ENCODE measurements at regions of chr10 and their contacts with region 1.

Region 1: DNA sequence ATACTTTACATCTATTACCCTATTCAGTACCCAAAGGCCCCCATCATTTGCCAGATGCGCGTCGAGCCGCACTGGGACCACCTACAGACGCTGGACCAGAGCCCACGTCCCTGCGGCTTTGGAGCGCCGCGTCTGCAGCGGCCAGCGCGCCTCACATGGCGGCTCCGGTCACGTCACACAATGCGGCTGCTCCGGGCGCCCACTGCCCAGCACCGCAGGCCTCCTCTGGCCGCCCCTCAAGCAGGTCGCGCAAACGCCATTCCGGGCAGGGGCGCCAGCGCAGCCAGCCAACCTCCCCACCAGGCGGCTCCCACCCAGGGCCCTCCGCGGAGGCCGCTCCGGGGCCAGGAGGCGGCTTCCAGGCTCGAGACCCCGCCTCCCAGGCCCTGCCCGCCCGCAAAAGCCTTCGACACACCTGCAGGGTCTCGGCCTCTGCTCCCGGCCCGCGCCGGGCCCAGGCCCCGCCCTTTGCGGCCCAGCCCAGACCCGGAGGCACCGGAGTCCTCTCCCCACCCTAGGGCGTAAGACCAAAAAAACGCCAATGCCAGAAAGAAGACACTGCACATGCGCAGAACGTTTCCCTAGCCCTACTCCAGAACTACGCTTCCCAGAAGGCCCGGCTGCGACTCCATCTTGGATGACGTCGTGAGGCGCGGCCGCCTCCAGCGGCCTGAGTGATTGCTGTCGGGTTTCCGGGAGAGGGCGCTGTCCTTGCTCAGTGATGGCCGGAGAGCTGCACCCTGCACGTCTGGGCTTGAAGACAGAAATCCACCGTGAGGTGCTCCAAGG is at the start of gene ZNF25:
- DNase-seq: peak; percentile 100
- ATAC-seq: peak; percentile 89
- H3K4me3 ChIP-seq: peak within 1 kb of the TSS; percentile 62 to 84 (median 78)
- H3K4me3 Mint-ChIP-seq: peak within 1 kb of the TSS; percentile 95
- H3K27ac ChIP-seq: peak within 1 kb of the TSS; percentile 88 to 94
- H3K27ac Mint-ChIP-seq: peak within 1 kb of the TSS; percentile 99
- H3K4me1 ChIP-seq: peaks cover 9 to 13% of the 10 kb centered on the region in 2 donors
- H3K4me1 Mint-ChIP-seq: peaks cover 17% of the 10 kb centered on the region
- H3K27me3 ChIP-seq: no peaks in the 10 kb centered on the region
- H3K27me3 Mint-ChIP-seq: no peaks in the 10 kb centered on the region
- CTCF ChIP-seq: peak; percentile 84
- total RNA-seq, gene ZNF25: 6.4 and 6.5 TPM in 2 replicates

Region 2: GRCh38 chr10:37857287-37858211 is 118.7 kb before region 1 on chr10 and contains the start of gene ZNF248:
- CTCF ChIA-PET with region 1: interaction called, 4 read pairs
- POLR2A ChIA-PET with region 1: interaction called, 3 read pairs
- intact Hi-C with region 1: loop called (anchors 1 kb)
- DNase-seq: peak; percentile 96
- ATAC-seq: peak; percentile 96
- H3K4me3 ChIP-seq: peak within 1 kb of the TSS; percentile 70 to 97 (median 88)
- H3K4me3 Mint-ChIP-seq: peak within 1 kb of the TSS; percentile 99
- H3K27ac ChIP-seq: peak within 1 kb of the TSS; percentile 85 to 95
- H3K27ac Mint-ChIP-seq: peak within 1 kb of the TSS; percentile 99
- H3K4me1 ChIP-seq: peaks cover 13 to 14% of the 10 kb centered on the region in 2 donors
- H3K4me1 Mint-ChIP-seq: peaks cover 35% of the 10 kb centered on the region
- H3K27me3 ChIP-seq: no peaks in the 10 kb centered on the region
- H3K27me3 Mint-ChIP-seq: no peaks in the 10 kb centered on the region
- CTCF ChIP-seq: no peak
- total RNA-seq, gene ZNF248: 18.2 and 19.5 TPM in 2 replicates

Region 3: GRCh38 chr10:37865957-37866671 is 110.2 kb before region 1 on chr10:
- CTCF ChIA-PET with region 1: interaction called, 4 read pairs
- POLR2A ChIA-PET with region 1: no interaction called
- intact Hi-C with region 1: loop called (anchors 2 kb)
- DNase-seq: peak; percentile 76
- ATAC-seq: peak; percentile 45
- H3K4me3 ChIP-seq: no peak overlapping the region
- H3K4me3 Mint-ChIP-seq: peak overlapping the region; percentile 45
- H3K27ac ChIP-seq: peak overlapping the region; percentile 64 to 87
- H3K27ac Mint-ChIP-seq: peak overlapping the region; percentile 96
- H3K4me1 ChIP-seq: peaks cover 11 to 13% of the 10 kb centered on the region in 2 donors
- H3K4me1 Mint-ChIP-seq: peaks cover 16% of the 10 kb centered on the region
- H3K27me3 ChIP-seq: no peaks in the 10 kb centered on the region
- H3K27me3 Mint-ChIP-seq: no peaks in the 10 kb centered on the region
- CTCF ChIP-seq: no peak

Region 4: GRCh38 chr10:37992083-37992482 is 15.8 kb after region 1 on chr10:
- CTCF ChIA-PET with region 1: interaction called, 12 read pairs
- POLR2A ChIA-PET with region 1: no interaction called
- intact Hi-C with region 1: no loop called
- DNase-seq: no peak
- ATAC-seq: no peak
- H3K4me3 ChIP-seq: no peak overlapping the region
- H3K4me3 Mint-ChIP-seq: no peak overlapping the region
- H3K27ac ChIP-seq: no peak overlapping the region
- H3K27ac Mint-ChIP-seq: no peak overlapping the region
- H3K4me1 ChIP-seq: no peaks in the 10 kb centered on the region
- H3K4me1 Mint-ChIP-seq: no peaks in the 10 kb centered on the region
- H3K27me3 ChIP-seq: no peaks in the 10 kb centered on the region
- H3K27me3 Mint-ChIP-seq: peaks cover 4% of the 10 kb centered on the region
- CTCF ChIP-seq: no peak

Region 5: DNA sequence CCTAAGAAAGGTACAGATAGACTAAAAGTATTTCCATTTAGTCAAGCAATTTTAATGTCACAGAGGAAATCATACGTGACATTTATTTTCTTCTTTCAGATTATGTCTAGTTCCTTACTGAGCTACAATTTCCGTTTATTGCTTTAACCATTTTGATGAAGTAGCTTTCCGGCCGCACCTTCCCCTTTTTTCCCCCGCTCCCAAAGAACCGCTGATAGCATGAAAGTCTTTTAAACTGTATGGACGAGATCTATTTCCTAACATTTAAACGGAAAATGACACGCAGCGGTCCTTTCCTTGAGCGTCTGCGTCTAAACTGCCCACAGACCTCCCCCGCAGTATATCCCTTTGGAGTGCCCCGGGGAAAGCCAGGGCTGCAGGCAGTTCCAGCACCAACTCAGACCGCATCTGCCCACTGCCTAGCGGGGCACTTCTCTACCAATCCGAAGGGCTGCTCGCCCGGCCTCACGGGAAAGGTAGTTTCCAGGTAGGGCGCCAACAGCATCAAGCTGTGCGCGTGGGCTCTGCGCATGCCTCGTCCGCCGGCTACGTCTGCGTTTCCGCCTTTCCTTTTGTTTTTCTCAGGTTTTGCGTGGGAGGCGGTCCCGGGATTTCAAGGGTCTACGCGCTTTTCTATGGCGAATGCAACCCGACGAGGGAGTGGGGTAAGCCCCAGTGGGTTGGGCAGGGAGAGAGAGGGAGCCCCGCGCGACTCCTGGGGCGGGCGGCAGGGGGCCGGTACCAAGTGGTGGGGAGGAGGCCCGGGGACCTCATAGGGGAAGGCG is 34.0 kb after region 1 on chr10 and contains the start of gene ZNF33A:
- CTCF ChIA-PET with region 1: interaction called, 31 read pairs
- POLR2A ChIA-PET with region 1: interaction called, 23 read pairs
- intact Hi-C with region 1: loop called (anchors 1 kb)
- DNase-seq: peak; percentile 97
- ATAC-seq: peak; percentile 84
- H3K4me3 ChIP-seq: peak within 1 kb of the TSS; percentile 72 to 78 (median 73)
- H3K4me3 Mint-ChIP-seq: peak within 1 kb of the TSS; percentile 80
- H3K27ac ChIP-seq: peak within 1 kb of the TSS; percentile 99
- H3K27ac Mint-ChIP-seq: peak within 1 kb of the TSS; percentile 99
- H3K4me1 ChIP-seq: peaks cover 16 to 17% of the 10 kb centered on the region in 2 donors
- H3K4me1 Mint-ChIP-seq: peaks cover 31% of the 10 kb centered on the region
- H3K27me3 ChIP-seq: no peaks in the 10 kb centered on the region
- H3K27me3 Mint-ChIP-seq: no peaks in the 10 kb centered on the region
- CTCF ChIP-seq: no peak
- total RNA-seq, gene ZNF33A: 86.6 and 96.1 TPM in 2 replicates

Region 6: GRCh38 chr10:38038107-38038931 is 62.0 kb after region 1 on chr10:
- CTCF ChIA-PET with region 1: interaction called, 4 read pairs
- POLR2A ChIA-PET with region 1: no interaction called
- intact Hi-C with region 1: loop called (anchors 1 kb)
- DNase-seq: peak; percentile 64
- ATAC-seq: peak; percentile 90
- H3K4me3 ChIP-seq: peak overlapping the region in 4 of 5 experiments; percentile 22 to 48 (median 35)
- H3K4me3 Mint-ChIP-seq: peak overlapping the region; percentile 76
- H3K27ac ChIP-seq: peak overlapping the region; percentile 76 to 81
- H3K27ac Mint-ChIP-seq: peak overlapping the region; percentile 89
- H3K4me1 ChIP-seq: peaks cover 9 to 14% of the 10 kb centered on the region in 2 donors
- H3K4me1 Mint-ChIP-seq: peaks cover 32% of the 10 kb centered on the region
- H3K27me3 ChIP-seq: no peaks in the 10 kb centered on the region
- H3K27me3 Mint-ChIP-seq: no peaks in the 10 kb centered on the region
- CTCF ChIP-seq: no peak

Region 7: GRCh38 chr10:38094158-38094920 is 118.1 kb after region 1 on chr10 and contains the start of gene ZNF37A:
- CTCF ChIA-PET with region 1: interaction called, 7 read pairs
- POLR2A ChIA-PET with region 1: interaction called, 3 read pairs
- intact Hi-C with region 1: loop called (anchors 1 kb)
- DNase-seq: peak; percentile 93
- ATAC-seq: peak; percentile 98
- H3K4me3 ChIP-seq: peak within 1 kb of the TSS; percentile 81 to 91 (median 89)
- H3K4me3 Mint-ChIP-seq: peak within 1 kb of the TSS; percentile 92
- H3K27ac ChIP-seq: peak within 1 kb of the TSS; percentile 84 to 88
- H3K27ac Mint-ChIP-seq: peak within 1 kb of the TSS; percentile 90
- H3K4me1 ChIP-seq: peaks cover 13 to 17% of the 10 kb centered on the region in 2 donors
- H3K4me1 Mint-ChIP-seq: peaks cover 22% of the 10 kb centered on the region
- H3K27me3 ChIP-seq: no peaks in the 10 kb centered on the region
- H3K27me3 Mint-ChIP-seq: no peaks in the 10 kb centered on the region
- CTCF ChIP-seq: no peak
- total RNA-seq, gene ZNF37A: 26.4 and 29.6 TPM in 2 replicates

Region 8: DNA sequence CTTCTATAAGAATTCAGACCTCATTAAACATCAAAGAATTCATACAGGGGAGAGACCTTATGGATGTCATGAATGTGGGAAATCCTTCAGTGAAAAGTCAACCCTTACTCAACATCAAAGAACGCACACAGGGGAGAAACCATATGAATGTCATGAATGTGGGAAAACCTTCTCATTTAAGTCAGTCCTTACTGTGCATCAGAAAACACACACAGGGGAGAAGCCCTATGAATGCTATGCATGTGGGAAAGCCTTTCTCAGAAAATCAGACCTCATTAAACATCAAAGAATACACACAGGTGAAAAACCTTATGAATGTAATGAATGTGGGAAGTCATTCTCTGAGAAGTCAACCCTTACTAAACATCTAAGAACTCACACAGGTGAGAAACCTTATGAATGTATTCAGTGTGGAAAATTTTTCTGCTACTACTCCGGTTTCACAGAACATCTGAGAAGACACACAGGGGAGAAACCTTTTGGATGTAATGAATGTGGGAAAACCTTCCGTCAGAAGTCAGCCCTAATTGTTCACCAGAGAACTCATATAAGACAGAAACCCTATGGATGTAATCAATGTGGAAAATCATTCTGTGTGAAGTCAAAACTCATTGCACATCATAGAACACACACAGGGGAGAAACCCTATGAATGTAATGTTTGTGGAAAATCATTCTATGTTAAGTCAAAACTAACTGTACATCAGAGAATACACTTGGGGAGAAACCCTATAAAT is 142.0 kb after region 1 on chr10:
- CTCF ChIA-PET with region 1: no interaction called
- POLR2A ChIA-PET with region 1: no interaction called
- intact Hi-C with region 1: no loop called
- DNase-seq: no peak
- ATAC-seq: no peak
- H3K4me3 ChIP-seq: peak overlapping the region in 1 of 5 experiments; percentile 6
- H3K4me3 Mint-ChIP-seq: no peak overlapping the region
- H3K27ac ChIP-seq: no peak overlapping the region
- H3K27ac Mint-ChIP-seq: no peak overlapping the region
- H3K4me1 ChIP-seq: no peaks in the 10 kb centered on the region
- H3K4me1 Mint-ChIP-seq: no peaks in the 10 kb centered on the region
- H3K27me3 ChIP-seq: no peaks in the 10 kb centered on the region
- H3K27me3 Mint-ChIP-seq: no peaks in the 10 kb centered on the region
- CTCF ChIP-seq: no peak

Measured in B cell (primary cell).